Esophagus muscularis mucosa (tissue), 4 donors: ENCODE measurements at regions of chr11 and their contacts with region 1.

Region 1: GRCh38 chr11:72080256-72080974 is at the starts of genes LRRC51 and NUMA1:
- DNase-seq: peak; percentile 100
- H3K4me3 ChIP-seq: peak within 1 kb of the TSS; percentile 69 to 80 (median 78)
- H3K27ac ChIP-seq: peak within 1 kb of the TSS; percentile 90 to 95 (median 93)
- H3K4me1 ChIP-seq: peaks cover 19 to 41% (median 31%) of the 10 kb centered on the region in 4 donors
- H3K27me3 ChIP-seq: no peaks in the 10 kb centered on the region
- CTCF ChIP-seq: no peak
- EP300 ChIP-seq: no peak
- POLR2A ChIP-seq: no peak
- total RNA-seq, gene LRRC51: 9.1 to 10.0 (median 9.2) TPM
- total RNA-seq, gene NUMA1: 214 to 328 (median 272) TPM

Region 2: GRCh38 chr11:71991494-71991893 is 88.9 kb before region 1 on chr11:
- intact Hi-C with region 1: no loop called
- DNase-seq: peak; percentile 75
- H3K4me3 ChIP-seq: no peak overlapping the region
- H3K27ac ChIP-seq: no peak overlapping the region
- H3K4me1 ChIP-seq: peaks cover 10 to 27% (median 25%) of the 10 kb centered on the region in 4 donors
- H3K27me3 ChIP-seq: no peaks in the 10 kb centered on the region
- CTCF ChIP-seq: no peak
- EP300 ChIP-seq: no peak
- POLR2A ChIP-seq: no peak

Region 3: DNA sequence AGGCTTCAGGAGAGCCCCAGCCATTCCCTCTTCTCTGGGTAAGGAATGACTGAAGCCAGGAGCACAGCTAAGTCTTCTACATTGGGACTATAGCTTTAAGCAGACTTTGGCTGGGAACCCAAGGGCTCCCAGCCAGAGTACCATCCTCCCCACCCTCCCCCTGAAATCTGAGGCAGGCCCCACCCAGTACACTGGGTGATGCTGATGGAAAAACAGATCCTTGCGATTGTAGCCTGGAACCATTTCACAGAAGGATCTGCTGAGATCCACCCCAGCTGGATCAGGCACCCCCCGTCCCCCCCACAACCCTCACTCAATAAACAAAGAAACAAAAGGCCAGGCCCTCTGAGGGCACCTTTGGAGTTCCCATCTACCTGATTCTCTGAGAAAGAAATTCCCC is 41.9 kb before region 1 on chr11:
- intact Hi-C with region 1: loop called (anchors 2 kb)
- DNase-seq: no peak
- H3K4me3 ChIP-seq: peak overlapping the region; percentile 62 to 78 (median 66)
- H3K27ac ChIP-seq: peak overlapping the region; percentile 95 to 97 (median 96)
- H3K4me1 ChIP-seq: peaks cover 68 to 88% (median 81%) of the 10 kb centered on the region in 4 donors
- H3K27me3 ChIP-seq: no peaks in the 10 kb centered on the region
- CTCF ChIP-seq: peak in 1 of 3 experiments; percentile 11
- EP300 ChIP-seq: no peak
- POLR2A ChIP-seq: peak; percentile 37